Colonic mucosa (tissue), 4 donors: ENCODE measurements at regions of chr10 and their contacts with region 1.

Region 1: GRCh38 chr10:69408318-69409175 is 8.2 kb downstream of the TACR2 start:
- DNase-seq: peak; percentile 97
- H3K4me3 ChIP-seq: peak overlapping the region; percentile 13
- H3K27ac ChIP-seq: peak overlapping the region; percentile 90
- H3K4me1 ChIP-seq: no peaks in the 10 kb centered on the region
- H3K27me3 ChIP-seq: no peaks in the 10 kb centered on the region
- CTCF ChIP-seq: peak; percentile 74

Region 2: GRCh38 chr10:69222157-69223027 is 186.2 kb before region 1 on chr10:
- intact Hi-C with region 1: no loop called
- DNase-seq: peak; percentile 92
- H3K4me3 ChIP-seq: no peak overlapping the region
- H3K27ac ChIP-seq: peak overlapping the region; percentile 86
- H3K4me1 ChIP-seq: no peaks in the 10 kb centered on the region
- H3K27me3 ChIP-seq: no peaks in the 10 kb centered on the region
- CTCF ChIP-seq: peak; percentile 80

Region 3: DNA sequence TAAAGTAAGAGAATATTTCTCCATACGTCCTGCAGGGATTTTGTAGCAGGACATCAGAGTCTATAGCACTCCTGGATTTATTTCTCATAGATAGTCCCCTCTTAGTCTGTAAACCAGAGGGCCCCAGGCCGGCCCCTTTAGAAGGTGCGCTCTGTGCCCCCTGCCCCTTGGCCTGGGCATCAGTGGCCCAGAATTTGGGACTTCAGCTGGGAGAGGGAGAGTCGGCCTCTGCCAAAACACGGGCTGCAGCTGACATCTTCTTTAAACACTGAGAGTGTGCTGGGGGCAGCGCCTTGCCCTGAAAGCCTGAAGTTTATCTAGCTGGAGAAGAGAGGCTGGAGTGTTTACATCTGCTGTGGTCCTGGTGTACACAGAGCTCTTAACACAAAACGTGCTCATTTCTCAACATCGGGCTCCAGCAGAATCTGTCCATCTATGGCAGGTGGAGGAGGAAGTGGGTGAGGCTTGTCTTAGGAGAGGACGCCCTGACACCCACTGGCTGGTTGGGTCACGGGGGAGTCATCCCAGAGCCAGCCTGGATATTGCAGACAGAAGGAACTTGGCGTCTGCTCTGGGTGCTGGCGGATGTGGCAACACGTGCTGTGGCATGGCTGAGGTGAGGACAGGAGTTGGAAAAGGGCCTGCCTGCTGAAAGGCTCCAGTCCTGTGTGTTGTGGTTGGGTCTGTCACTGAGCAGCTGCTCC is 13.2 kb after region 1 on chr10:
- intact Hi-C with region 1: loop called (anchors 1 kb)
- DNase-seq: no peak
- H3K4me3 ChIP-seq: no peak overlapping the region
- H3K27ac ChIP-seq: peak overlapping the region; percentile 17
- H3K4me1 ChIP-seq: peaks cover 8% of the 10 kb centered on the region
- H3K27me3 ChIP-seq: no peaks in the 10 kb centered on the region
- CTCF ChIP-seq: no peak

Region 4: GRCh38 chr10:69541463-69541862 is 132.9 kb after region 1 on chr10:
- intact Hi-C with region 1: no loop called
- DNase-seq: no peak
- H3K4me3 ChIP-seq: no peak overlapping the region
- H3K27ac ChIP-seq: no peak overlapping the region
- H3K4me1 ChIP-seq: no peaks in the 10 kb centered on the region
- H3K27me3 ChIP-seq: no peaks in the 10 kb centered on the region
- CTCF ChIP-seq: no peak

Region 5: GRCh38 chr10:69819716-69820506 is 411.4 kb after region 1 on chr10:
- intact Hi-C with region 1: no loop called
- DNase-seq: no peak
- H3K4me3 ChIP-seq: no peak overlapping the region
- H3K27ac ChIP-seq: no peak overlapping the region
- H3K4me1 ChIP-seq: no peaks in the 10 kb centered on the region
- H3K27me3 ChIP-seq: no peaks in the 10 kb centered on the region
- CTCF ChIP-seq: no peak